PC-9 (cell line): ENCODE measurements at regions of chr4 and their contacts with region 1.

Region 1: GRCh38 chr4:123278755-123279154 is 117.8 kb upstream of the SPRY1 start:
- DNase-seq: no peak
- H3K4me3 ChIP-seq: no peak overlapping the region
- H3K27ac ChIP-seq: no peak overlapping the region
- H3K4me1 ChIP-seq: no peaks in the 10 kb centered on the region
- H3K27me3 ChIP-seq: no peaks in the 10 kb centered on the region
- CTCF ChIP-seq: no peak

Region 2: GRCh38 chr4:122588453-122589238 is 690.1 kb before region 1 on chr4:
- CTCF ChIA-PET with region 1: no interaction called
- POLR2A ChIA-PET with region 1: no interaction called
- intact Hi-C with region 1: loop called (anchors 5 kb)
- DNase-seq: no peak
- H3K4me3 ChIP-seq: no peak overlapping the region
- H3K27ac ChIP-seq: no peak overlapping the region
- H3K4me1 ChIP-seq: no peaks in the 10 kb centered on the region
- H3K27me3 ChIP-seq: no peaks in the 10 kb centered on the region
- CTCF ChIP-seq: no peak

Region 3: GRCh38 chr4:122602277-122603142 is 676.2 kb before region 1 on chr4:
- CTCF ChIA-PET with region 1: no interaction called
- POLR2A ChIA-PET with region 1: no interaction called
- intact Hi-C with region 1: no loop called
- DNase-seq: peak in 1 of 2 experiments; percentile 6
- H3K4me3 ChIP-seq: no peak overlapping the region
- H3K27ac ChIP-seq: no peak overlapping the region
- H3K4me1 ChIP-seq: no peaks in the 10 kb centered on the region
- H3K27me3 ChIP-seq: 0 out of 2 replicates have a peak, but pooled peaks cover 6% of the 10 kb centered on the region
- CTCF ChIP-seq: peak; percentile 64

Region 4: GRCh38 chr4:123064390-123064789 is 214.4 kb before region 1 on chr4:
- CTCF ChIA-PET with region 1: no interaction called
- POLR2A ChIA-PET with region 1: no interaction called
- intact Hi-C with region 1: no loop called
- DNase-seq: peak in 1 of 2 experiments; percentile 59
- H3K4me3 ChIP-seq: no peak overlapping the region
- H3K27ac ChIP-seq: no peak overlapping the region
- H3K4me1 ChIP-seq: no peaks in the 10 kb centered on the region; the same call in 1 of the 2 replicates
- H3K27me3 ChIP-seq: no peaks in the 10 kb centered on the region
- CTCF ChIP-seq: no peak